ENCODE measurements at regions of chr5 and their contacts with region 1.

Region 1: GRCh38 chr5:52657247-52657645 is 130.5 kb upstream of the ITGA1 start:
- DNase-seq: peak; percentile 15
- H3K4me3 ChIP-seq: no peak overlapping the region
- H3K27ac ChIP-seq: no peak overlapping the region
- H3K27me3 ChIP-seq: no peaks in the 10 kb centered on the region
- CTCF ChIP-seq: peak; percentile 51

Region 2: GRCh38 chr5:52560366-52560765 is 96.9 kb before region 1 on chr5:
- CTCF ChIA-PET with region 1: no interaction called
- POLR2A ChIA-PET with region 1: no interaction called
- DNase-seq: no peak
- H3K4me3 ChIP-seq: no peak overlapping the region
- H3K27ac ChIP-seq: no peak overlapping the region
- H3K27me3 ChIP-seq: no peaks in the 10 kb centered on the region
- CTCF ChIP-seq: no peak

Region 3: DNA sequence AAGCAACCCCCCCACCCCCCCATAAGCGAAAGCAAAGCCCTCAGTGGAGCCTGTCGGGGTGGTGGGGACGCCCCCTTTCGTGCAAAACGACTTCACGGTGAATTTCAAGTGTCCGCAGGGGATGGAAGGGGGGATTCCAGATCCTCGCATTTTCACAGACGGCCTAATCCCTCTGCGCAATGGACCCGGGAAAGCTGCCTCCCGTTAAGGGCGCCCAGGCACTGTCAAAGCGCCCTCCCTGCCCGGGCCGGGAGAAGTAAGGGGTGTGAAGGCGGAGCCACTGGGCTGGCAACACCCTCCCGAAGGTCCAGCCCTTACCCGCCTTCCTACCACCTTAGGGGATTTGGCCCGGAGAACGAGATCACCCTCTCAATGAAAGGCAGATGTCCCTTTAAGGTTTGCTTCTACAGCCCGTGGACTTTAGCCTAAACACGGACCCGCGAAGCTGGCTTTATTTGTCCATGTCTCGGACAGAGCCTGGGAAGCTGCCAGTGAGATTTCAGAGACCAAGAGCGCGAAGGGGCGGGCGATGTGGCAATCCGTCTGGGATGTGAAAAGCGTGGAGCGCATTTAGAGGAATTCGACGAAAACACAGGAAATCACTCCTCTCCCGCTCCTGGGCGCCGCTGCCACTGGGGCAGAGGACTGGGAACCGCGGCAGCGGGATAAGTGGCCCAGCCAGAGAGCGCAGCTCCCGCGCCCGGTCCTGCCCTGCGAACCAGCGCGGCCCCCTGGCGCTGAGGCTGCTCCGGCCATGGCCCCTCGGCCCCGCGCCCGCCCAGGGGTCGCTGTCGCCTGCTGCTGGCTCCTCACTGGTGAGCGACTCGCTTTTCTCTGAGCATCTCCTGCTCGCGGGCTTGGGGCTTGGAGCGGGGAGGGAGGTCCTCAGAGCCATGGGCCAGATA is 130.6 kb after region 1 on chr5 and contains the starts of genes ITGA1 and PELO:
- CTCF ChIA-PET with region 1: no interaction called
- POLR2A ChIA-PET with region 1: no interaction called
- DNase-seq: peak; percentile 59
- H3K4me3 ChIP-seq: peak within 1 kb of the TSS; percentile 77
- H3K27ac ChIP-seq: peak within 1 kb of the TSS; percentile 72
- H3K27me3 ChIP-seq: no peaks in the 10 kb centered on the region
- CTCF ChIP-seq: peak; percentile 28
- polyA plus RNA-seq, gene ITGA1: 136 and 148 TPM in 2 replicates
- polyA plus RNA-seq, gene PELO: 49.4 TPM in 2 replicates

Region 4: GRCh38 chr5:52811067-52811749 is 154.0 kb after region 1 on chr5:
- CTCF ChIA-PET with region 1: no interaction called
- POLR2A ChIA-PET with region 1: interaction called, 10 read pairs
- DNase-seq: no peak
- H3K4me3 ChIP-seq: no peak overlapping the region
- H3K27ac ChIP-seq: no peak overlapping the region
- H3K27me3 ChIP-seq: no peaks in the 10 kb centered on the region
- CTCF ChIP-seq: no peak

Measured in AG04450 (cell line).